ENCODE measurements at regions of chr14 and their contacts with region 1.

Region 1: DNA sequence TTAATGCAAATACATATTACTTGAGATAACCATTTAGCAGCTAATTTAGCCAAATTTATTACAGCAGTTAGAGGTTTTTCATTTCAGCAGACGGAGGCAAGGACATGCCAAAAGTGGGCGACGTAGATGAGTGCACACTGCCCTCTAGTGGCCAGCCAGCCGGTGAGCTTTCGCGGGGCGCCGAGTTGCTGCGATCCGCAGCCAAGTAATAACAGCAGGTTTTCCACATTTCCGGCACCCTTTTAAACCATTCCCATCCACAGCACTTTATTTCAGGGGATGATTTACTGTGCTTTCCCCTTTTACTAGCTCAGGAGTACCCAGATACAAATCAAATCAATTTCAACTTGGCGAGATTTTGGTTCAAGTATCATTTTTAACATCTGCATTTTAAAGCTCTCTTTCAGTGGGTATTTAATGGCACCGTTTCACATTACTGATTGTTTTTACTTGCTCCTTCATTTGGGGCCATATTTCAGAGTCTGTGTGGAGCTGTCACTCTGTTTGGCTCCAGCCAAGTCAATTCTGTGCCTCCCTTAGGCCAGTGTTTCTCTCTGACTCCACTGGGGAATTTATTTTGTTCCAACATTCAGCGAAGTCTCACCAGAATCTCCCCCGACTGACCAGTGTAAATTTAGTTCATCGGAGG is 158.0 kb downstream of the EGLN3 start:
- DNase-seq: peak; percentile 85
- ATAC-seq: peak; percentile 91
- H3K4me3 ChIP-seq: peak overlapping the region; percentile 55
- H3K27ac ChIP-seq: no peak overlapping the region
- H3K4me1 ChIP-seq: peaks cover 11% of the 10 kb centered on the region
- H3K27me3 ChIP-seq: no peaks in the 10 kb centered on the region
- CTCF ChIP-seq: peak; percentile 97

Region 2: GRCh38 chr14:32576088-32576795 is 1216.6 kb before region 1 on chr14:
- CTCF ChIA-PET with region 1: no interaction called
- POLR2A ChIA-PET with region 1: no interaction called
- intact Hi-C with region 1: loop called (anchors 2 kb)
- DNase-seq: peak; percentile 75
- ATAC-seq: peak; percentile 95
- H3K4me3 ChIP-seq: no peak overlapping the region
- H3K27ac ChIP-seq: no peak overlapping the region
- H3K4me1 ChIP-seq: no peaks in the 10 kb centered on the region
- H3K27me3 ChIP-seq: no peaks in the 10 kb centered on the region
- CTCF ChIP-seq: peak; percentile 96

Region 3: GRCh38 chr14:32939254-32940065 is 853.4 kb before region 1 on chr14:
- CTCF ChIA-PET with region 1: no interaction called
- POLR2A ChIA-PET with region 1: no interaction called
- intact Hi-C with region 1: loop called (anchors 10 kb)
- DNase-seq: peak; percentile 63
- ATAC-seq: peak; percentile 61
- H3K4me3 ChIP-seq: peak overlapping the region; percentile 64
- H3K27ac ChIP-seq: no peak overlapping the region
- H3K4me1 ChIP-seq: peaks cover 14% of the 10 kb centered on the region; the same call in 1 of the 2 replicates
- H3K27me3 ChIP-seq: peaks cover 29% of the 10 kb centered on the region
- CTCF ChIP-seq: no peak

Region 4: GRCh38 chr14:33432407-33433023 is 360.3 kb before region 1 on chr14:
- CTCF ChIA-PET with region 1: no interaction called
- POLR2A ChIA-PET with region 1: no interaction called
- intact Hi-C with region 1: loop called (anchors 2 kb)
- DNase-seq: peak; percentile 71
- ATAC-seq: peak; percentile 54
- H3K4me3 ChIP-seq: no peak overlapping the region
- H3K27ac ChIP-seq: no peak overlapping the region
- H3K4me1 ChIP-seq: peaks cover 12% of the 10 kb centered on the region
- H3K27me3 ChIP-seq: no peaks in the 10 kb centered on the region
- CTCF ChIP-seq: peak; percentile 82

Region 5: GRCh38 chr14:33617190-33617622 is 175.6 kb before region 1 on chr14:
- CTCF ChIA-PET with region 1: no interaction called
- POLR2A ChIA-PET with region 1: no interaction called
- intact Hi-C with region 1: loop called (anchors 5 kb)
- DNase-seq: peak; percentile 94
- ATAC-seq: peak; percentile 90
- H3K4me3 ChIP-seq: peak overlapping the region; percentile 6; the same call in 1 of the 2 replicates
- H3K27ac ChIP-seq: peak overlapping the region; percentile 57
- H3K4me1 ChIP-seq: peaks cover 19% of the 10 kb centered on the region
- H3K27me3 ChIP-seq: no peaks in the 10 kb centered on the region
- CTCF ChIP-seq: no peak

Region 6: DNA sequence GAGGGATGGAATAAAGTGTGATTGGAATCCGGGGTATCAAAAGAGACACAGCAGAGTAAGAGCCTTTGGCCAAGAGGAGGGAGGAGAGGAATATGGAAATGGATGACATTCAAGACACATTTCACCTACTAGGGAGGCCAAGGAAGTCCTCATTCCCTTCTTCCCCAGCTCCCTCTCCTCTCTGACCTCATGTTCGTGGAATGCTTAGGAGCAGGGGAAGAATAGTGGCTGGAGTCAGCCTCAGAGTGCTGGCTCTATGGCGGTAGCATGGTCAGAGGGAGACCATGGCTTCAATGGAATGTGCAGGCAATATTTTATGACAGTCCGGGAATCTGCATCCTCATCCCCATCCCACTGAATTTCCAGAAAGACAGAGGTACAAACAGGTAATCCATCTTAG is 38.6 kb before region 1 on chr14:
- CTCF ChIA-PET with region 1: no interaction called
- POLR2A ChIA-PET with region 1: no interaction called
- intact Hi-C with region 1: no loop called
- DNase-seq: peak; percentile 38
- ATAC-seq: peak; percentile 62; the same call in 1 of the 2 replicates
- H3K4me3 ChIP-seq: no peak overlapping the region
- H3K27ac ChIP-seq: no peak overlapping the region
- H3K4me1 ChIP-seq: peaks cover 15% of the 10 kb centered on the region; the same call in 1 of the 2 replicates
- H3K27me3 ChIP-seq: no peaks in the 10 kb centered on the region
- CTCF ChIP-seq: no peak

Region 7: GRCh38 chr14:34300882-34301734 is 508.3 kb after region 1 on chr14:
- CTCF ChIA-PET with region 1: no interaction called
- POLR2A ChIA-PET with region 1: no interaction called
- intact Hi-C with region 1: loop called (anchors 5 kb)
- DNase-seq: peak; percentile 78
- ATAC-seq: peak; percentile 74
- H3K4me3 ChIP-seq: no peak overlapping the region
- H3K27ac ChIP-seq: no peak overlapping the region
- H3K4me1 ChIP-seq: no peaks in the 10 kb centered on the region
- H3K27me3 ChIP-seq: no peaks in the 10 kb centered on the region
- CTCF ChIP-seq: peak; percentile 92